CD4-positive, alpha-beta memory T cell (primary cell): ENCODE measurements at regions of chr2 and their contacts with region 1.

Region 1: GRCh38 chr2:169159686-169160085 is 90.3 kb downstream of the DHRS9 start:
- DNase-seq: no peak
- H3K4me3 ChIP-seq: no peak overlapping the region
- H3K4me3 Mint-ChIP-seq: no peak overlapping the region
- H3K27ac ChIP-seq: no peak overlapping the region
- H3K27ac Mint-ChIP-seq: no peak overlapping the region
- H3K4me1 ChIP-seq: no peaks in the 10 kb centered on the region
- H3K4me1 Mint-ChIP-seq: no peaks in the 10 kb centered on the region
- H3K27me3 ChIP-seq: no peaks in the 10 kb centered on the region
- H3K27me3 Mint-ChIP-seq: peaks cover 7 to 8% of the 10 kb centered on the region in 2 donors

Region 2: GRCh38 chr2:169141713-169142352 is 17.9 kb before region 1 on chr2:
- CTCF ChIA-PET with region 1: interaction called, 35 read pairs
- POLR2A ChIA-PET with region 1: no interaction called
- intact Hi-C with region 1: no loop called
- DNase-seq: peak; percentile 41 to 63 (median 54)
- H3K4me3 ChIP-seq: no peak overlapping the region
- H3K4me3 Mint-ChIP-seq: no peak overlapping the region
- H3K27ac ChIP-seq: no peak overlapping the region
- H3K27ac Mint-ChIP-seq: no peak overlapping the region
- H3K4me1 ChIP-seq: no peaks in the 10 kb centered on the region
- H3K4me1 Mint-ChIP-seq: peaks cover 0 to 3% (median 0%) of the 10 kb centered on the region in 4 donors
- H3K27me3 ChIP-seq: no peaks in the 10 kb centered on the region
- H3K27me3 Mint-ChIP-seq: no peaks in the 10 kb centered on the region

Region 3: DNA sequence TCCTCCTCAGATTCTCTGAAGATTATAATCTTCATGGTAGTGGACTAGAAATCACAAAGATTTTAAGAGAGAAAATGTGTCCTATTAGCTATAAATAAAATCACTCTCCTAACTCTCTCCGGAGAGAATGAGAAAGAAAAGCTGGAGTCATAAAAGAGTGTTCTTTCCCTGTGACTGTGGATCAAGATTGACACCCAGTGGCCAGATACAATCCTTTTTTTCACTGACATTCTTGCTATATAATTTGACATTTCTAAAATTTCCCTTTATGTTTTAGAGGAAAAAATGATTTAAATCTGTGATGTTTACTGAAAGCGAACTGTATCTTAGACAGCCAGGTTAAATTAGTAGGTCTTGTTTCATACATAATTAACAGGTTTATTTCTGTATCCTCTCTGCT is 238.0 kb after region 1 on chr2:
- CTCF ChIA-PET with region 1: no interaction called
- POLR2A ChIA-PET with region 1: no interaction called
- intact Hi-C with region 1: no loop called
- DNase-seq: no peak
- H3K4me3 ChIP-seq: no peak overlapping the region
- H3K4me3 Mint-ChIP-seq: no peak overlapping the region
- H3K27ac ChIP-seq: no peak overlapping the region
- H3K27ac Mint-ChIP-seq: no peak overlapping the region
- H3K4me1 ChIP-seq: no peaks in the 10 kb centered on the region
- H3K4me1 Mint-ChIP-seq: no peaks in the 10 kb centered on the region
- H3K27me3 ChIP-seq: no peaks in the 10 kb centered on the region
- H3K27me3 Mint-ChIP-seq: peaks cover 6 to 19% of the 10 kb centered on the region in 2 donors